Caco-2 (cell line): ENCODE measurements at regions of chr6 and their contacts with region 1.

Region 1: GRCh38 chr6:39228992-39229767 is at the start of gene KCNK5:
- DNase-seq: peak; percentile 86 to 90
- H3K4me3 ChIP-seq: peak within 1 kb of the TSS; percentile 90
- H3K4me3 Mint-ChIP-seq: peak within 1 kb of the TSS; percentile 83
- H3K27ac Mint-ChIP-seq: peak within 1 kb of the TSS; percentile 50
- H3K4me1 ChIP-seq: peaks cover 32% of the 10 kb centered on the region
- H3K4me1 Mint-ChIP-seq: peaks cover 33% of the 10 kb centered on the region
- H3K27me3 ChIP-seq: no peaks in the 10 kb centered on the region
- H3K27me3 Mint-ChIP-seq: no peaks in the 10 kb centered on the region
- CTCF ChIP-seq: peak; percentile 73 to 80
- total RNA-seq, gene KCNK5: 19.8 and 20.9 TPM in 2 replicates

Region 2: DNA sequence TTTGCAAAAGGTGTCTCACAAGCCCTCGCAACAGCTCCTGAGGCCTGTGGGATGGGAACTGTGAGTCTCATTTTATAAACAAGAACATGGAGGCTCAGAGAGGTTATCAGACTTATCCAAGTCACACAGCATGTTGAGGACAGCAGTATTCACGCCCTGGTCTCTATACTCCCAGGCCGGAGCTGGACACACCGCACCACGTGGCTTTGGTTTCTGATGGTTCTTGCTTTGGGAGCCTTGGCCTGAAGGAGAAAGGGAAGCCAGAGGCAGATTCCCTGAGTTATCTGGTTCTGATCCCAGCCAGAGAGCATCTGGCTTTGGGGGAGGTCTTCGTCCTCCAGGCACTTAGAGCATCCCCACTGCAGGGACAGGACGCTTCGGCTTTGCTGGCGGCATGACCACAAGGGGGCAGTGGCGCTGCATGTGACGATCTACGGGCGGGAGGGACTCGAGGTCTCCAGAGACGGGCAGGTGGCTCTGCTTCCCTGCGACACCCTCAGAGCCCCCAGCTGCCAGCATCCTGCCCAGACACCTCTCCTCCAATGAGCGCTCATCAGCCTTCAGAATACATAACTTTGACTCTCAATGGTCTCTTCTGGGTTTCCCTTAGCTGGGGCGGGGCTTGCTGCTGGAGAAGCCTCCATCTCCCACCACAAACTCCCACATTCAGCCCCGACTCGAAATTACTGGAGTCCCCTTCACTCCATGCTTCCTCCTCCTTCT is 62.8 kb before region 1 on chr6:
- CTCF ChIA-PET with region 1: no interaction called
- POLR2A ChIA-PET with region 1: no interaction called
- intact Hi-C with region 1: loop called (anchors 2 kb)
- DNase-seq: peak; percentile 86 to 91
- H3K4me3 ChIP-seq: no peak overlapping the region
- H3K4me3 Mint-ChIP-seq: peak overlapping the region; percentile 10
- H3K27ac Mint-ChIP-seq: no peak overlapping the region
- H3K4me1 ChIP-seq: peaks cover 14% of the 10 kb centered on the region
- H3K4me1 Mint-ChIP-seq: peaks cover 9% of the 10 kb centered on the region
- H3K27me3 ChIP-seq: no peaks in the 10 kb centered on the region
- H3K27me3 Mint-ChIP-seq: no peaks in the 10 kb centered on the region
- CTCF ChIP-seq: peak; percentile 95

Region 3: GRCh38 chr6:39209360-39209811 is 19.8 kb before region 1 on chr6:
- CTCF ChIA-PET with region 1: no interaction called
- POLR2A ChIA-PET with region 1: interaction called, 3 read pairs
- intact Hi-C with region 1: loop called (anchors 2 kb)
- DNase-seq: no peak
- H3K4me3 ChIP-seq: no peak overlapping the region
- H3K4me3 Mint-ChIP-seq: no peak overlapping the region
- H3K27ac Mint-ChIP-seq: peak overlapping the region; percentile 45
- H3K4me1 ChIP-seq: peaks cover 71% of the 10 kb centered on the region
- H3K4me1 Mint-ChIP-seq: peaks cover 46% of the 10 kb centered on the region
- H3K27me3 ChIP-seq: no peaks in the 10 kb centered on the region
- H3K27me3 Mint-ChIP-seq: no peaks in the 10 kb centered on the region
- CTCF ChIP-seq: no peak

Region 4: GRCh38 chr6:39266375-39266774 is 37.2 kb after region 1 on chr6:
- CTCF ChIA-PET with region 1: interaction called, 7 read pairs
- POLR2A ChIA-PET with region 1: interaction called, 6 read pairs
- intact Hi-C with region 1: loop called (anchors 1 kb)
- DNase-seq: peak in 1 of 2 experiments; percentile 15
- H3K4me3 ChIP-seq: no peak overlapping the region
- H3K4me3 Mint-ChIP-seq: peak overlapping the region; percentile 26
- H3K27ac Mint-ChIP-seq: peak overlapping the region; percentile 63
- H3K4me1 ChIP-seq: peaks cover 58% of the 10 kb centered on the region
- H3K4me1 Mint-ChIP-seq: peaks cover 47% of the 10 kb centered on the region
- H3K27me3 ChIP-seq: no peaks in the 10 kb centered on the region
- H3K27me3 Mint-ChIP-seq: no peaks in the 10 kb centered on the region
- CTCF ChIP-seq: no peak